ENCODE measurements at regions of chr5 and their contacts with region 1.

Region 1: DNA sequence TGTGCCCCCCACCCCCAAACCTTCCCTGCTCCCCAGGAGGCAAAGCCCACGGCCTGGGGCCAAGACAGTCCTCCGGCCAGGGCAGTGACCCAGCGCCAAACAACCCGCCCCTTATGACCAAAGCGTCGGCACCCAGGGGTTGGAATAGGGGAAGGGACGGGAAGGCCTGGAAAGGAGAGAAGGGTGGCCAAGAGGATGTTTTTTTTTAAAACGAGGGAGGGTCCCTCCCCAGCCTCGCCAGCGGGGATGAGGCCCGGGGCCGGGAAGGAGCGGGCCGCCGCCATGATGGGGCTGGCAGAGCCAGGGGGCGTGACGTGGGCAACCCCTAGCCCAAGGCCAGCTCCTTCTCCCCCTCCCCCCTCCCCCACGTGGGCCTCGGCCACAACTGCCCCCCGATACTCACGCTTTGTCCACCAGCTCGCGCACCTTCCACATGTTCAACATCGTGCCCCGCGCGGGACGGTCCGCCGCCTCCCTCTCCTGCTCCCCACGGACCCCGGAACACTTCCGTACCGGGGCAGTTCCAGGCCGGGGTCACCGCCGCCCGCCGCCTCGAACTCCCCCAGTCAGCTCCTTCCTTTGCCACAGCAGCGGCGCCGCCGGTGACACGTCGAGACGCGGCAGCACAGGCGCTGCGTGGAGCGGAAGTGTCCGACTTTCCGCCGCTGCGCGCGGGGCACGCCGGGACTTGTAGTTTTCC is at the start of gene CLINT1:
- DNase-seq: peak; percentile 77 to 95
- H3K4me3 ChIP-seq: peak within 1 kb of the TSS; percentile 94 to 96
- H3K27ac ChIP-seq: peak within 1 kb of the TSS; percentile 86 to 92
- H3K4me1 ChIP-seq: peaks cover 0 to 25% of the 10 kb centered on the region in 2 donors
- H3K27me3 ChIP-seq: no peaks in the 10 kb centered on the region
- CTCF ChIP-seq: peak in 1 of 3 experiments; percentile 11
- total RNA-seq, gene CLINT1: 16.4 TPM

Region 2: DNA sequence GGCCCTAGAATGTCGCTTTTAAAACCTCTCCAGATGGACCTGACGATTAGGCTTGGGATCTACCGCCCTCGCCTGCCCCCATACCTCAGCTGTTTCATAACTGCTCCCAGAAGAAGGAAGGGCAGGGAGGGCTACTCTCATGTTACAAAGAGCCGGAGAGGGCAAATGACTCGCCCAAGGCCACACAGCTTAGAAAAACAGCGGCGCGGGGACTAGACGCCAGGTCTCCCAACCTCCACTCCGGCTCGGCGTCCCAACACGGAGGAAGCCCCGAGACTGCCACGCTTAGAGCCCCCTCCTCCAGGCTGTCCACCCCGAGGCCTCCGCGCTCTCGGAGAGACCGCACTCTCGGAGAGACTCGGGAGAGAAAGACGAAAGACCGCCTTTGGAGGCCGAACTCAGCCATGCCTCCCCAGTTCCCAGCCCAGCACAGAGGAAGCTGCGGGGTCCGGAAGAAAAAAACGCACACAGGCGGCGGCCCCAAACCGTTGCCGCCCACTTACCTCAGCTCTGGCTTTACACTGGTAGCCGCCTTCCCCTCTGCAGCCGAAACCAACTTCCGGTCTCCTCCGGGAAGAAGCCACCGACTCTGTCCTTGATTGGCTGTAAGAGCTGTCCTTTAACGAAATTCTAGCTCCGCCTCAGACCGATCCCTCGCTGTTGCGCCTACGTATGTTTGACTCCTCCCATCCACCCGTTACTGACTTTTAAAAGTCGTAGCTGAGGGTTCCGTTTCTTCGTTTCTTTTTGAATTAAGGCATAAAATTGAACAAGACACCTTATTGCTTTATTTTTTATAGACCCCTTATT is 716.2 kb before region 1 on chr5 and contains the start of gene MED7:
- intact Hi-C with region 1: loop called (anchors 5 kb)
- DNase-seq: peak; percentile 88 to 98
- H3K4me3 ChIP-seq: peak within 1 kb of the TSS; percentile 74 to 77
- H3K27ac ChIP-seq: peak within 1 kb of the TSS; percentile 89 to 90
- H3K4me1 ChIP-seq: peaks cover 5 to 9% of the 10 kb centered on the region in 2 donors
- H3K27me3 ChIP-seq: no peaks in the 10 kb centered on the region
- CTCF ChIP-seq: no peak
- total RNA-seq, gene MED7: 2.3 TPM

Region 3: GRCh38 chr5:157820593-157821252 is 38.0 kb before region 1 on chr5:
- intact Hi-C with region 1: loop called (anchors 5 kb)
- DNase-seq: no peak
- H3K4me3 ChIP-seq: no peak overlapping the region
- H3K27ac ChIP-seq: peak overlapping the region; percentile 31 to 41
- H3K4me1 ChIP-seq: peaks cover 0 to 13% of the 10 kb centered on the region in 2 donors
- H3K27me3 ChIP-seq: no peaks in the 10 kb centered on the region
- CTCF ChIP-seq: peak in 2 of 3 experiments; percentile 45 to 60

Region 4: GRCh38 chr5:157956271-157956885 is 97.7 kb after region 1 on chr5:
- intact Hi-C with region 1: no loop called
- DNase-seq: no peak
- H3K4me3 ChIP-seq: no peak overlapping the region
- H3K27ac ChIP-seq: no peak overlapping the region
- H3K4me1 ChIP-seq: no peaks in the 10 kb centered on the region
- H3K27me3 ChIP-seq: no peaks in the 10 kb centered on the region
- CTCF ChIP-seq: no peak

Region 5: DNA sequence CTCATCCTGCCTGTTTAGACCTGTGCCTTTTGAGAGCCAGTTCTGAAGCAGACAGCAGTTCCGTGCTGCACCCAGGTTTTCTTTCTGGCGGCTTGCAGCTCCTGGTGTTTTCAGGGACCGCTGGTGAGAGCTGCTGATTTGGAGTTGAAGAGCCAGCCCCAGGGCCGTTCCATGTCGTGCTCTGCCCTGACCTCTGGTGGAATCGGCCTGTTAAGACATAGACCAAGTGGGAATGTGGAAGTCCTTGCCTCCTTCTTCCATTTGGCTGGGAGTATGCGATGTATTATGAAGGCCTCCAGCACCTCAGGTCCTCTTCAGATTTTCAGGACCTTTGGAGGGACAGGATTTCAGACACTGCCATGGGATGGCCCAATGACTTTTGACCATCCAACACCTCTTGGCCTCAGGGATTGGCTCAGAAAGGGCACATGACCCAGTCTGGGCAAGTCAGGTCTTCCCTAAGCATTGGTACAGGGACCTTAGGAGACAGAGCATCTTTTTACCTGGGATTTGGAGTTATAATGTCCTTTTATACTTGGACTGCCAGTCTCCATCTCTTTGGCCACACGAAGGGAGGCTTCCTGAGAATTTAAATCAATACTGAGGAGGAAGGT is 136.3 kb after region 1 on chr5:
- intact Hi-C with region 1: loop called (anchors 10 kb)
- DNase-seq: peak in 1 of 2 donors; percentile 71
- H3K4me3 ChIP-seq: no peak overlapping the region
- H3K27ac ChIP-seq: no peak overlapping the region
- H3K4me1 ChIP-seq: peaks cover 0 to 4% of the 10 kb centered on the region in 2 donors
- H3K27me3 ChIP-seq: no peaks in the 10 kb centered on the region
- CTCF ChIP-seq: peak; percentile 67 to 74 (median 74)

Region 6: DNA sequence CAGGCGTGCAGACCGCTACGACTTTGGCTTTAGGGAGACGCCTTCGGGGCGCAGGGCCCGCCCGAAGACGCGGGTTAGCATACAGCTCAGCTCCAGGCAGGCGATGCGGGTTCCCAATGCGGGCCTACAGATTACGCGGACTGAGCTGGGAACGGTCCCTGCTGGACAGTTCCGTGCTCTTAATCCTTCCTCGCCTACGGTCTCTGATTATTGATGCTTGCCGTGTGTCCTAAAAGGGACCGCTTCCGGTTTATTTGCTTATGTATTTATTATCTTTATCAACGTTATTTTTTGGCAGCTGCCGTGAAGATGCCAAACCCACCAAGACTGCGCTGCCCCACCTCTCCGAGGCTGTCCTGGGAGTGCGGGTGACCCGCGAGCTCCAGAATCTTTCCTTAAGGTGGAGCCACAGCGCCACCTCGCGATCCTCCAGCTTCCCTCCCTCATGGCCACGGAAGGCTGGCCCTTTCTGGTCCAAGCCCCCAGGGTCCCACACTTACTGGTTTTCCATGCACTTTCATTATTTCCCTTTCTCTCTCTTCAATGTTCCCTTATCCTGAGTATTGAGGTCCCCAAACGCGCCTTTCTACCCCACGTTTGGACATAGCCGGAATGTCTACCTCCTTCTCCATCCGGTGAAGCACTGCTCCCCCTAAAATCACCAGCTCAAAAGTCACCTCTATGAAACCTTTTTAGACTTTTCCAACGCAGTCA is 1248.0 kb after region 1 on chr5:
- intact Hi-C with region 1: loop called (anchors 10 kb)
- DNase-seq: peak in 1 of 2 donors; percentile 88
- H3K4me3 ChIP-seq: peak overlapping the region; percentile 46 to 61
- H3K27ac ChIP-seq: peak overlapping the region in 1 of 2 donors; percentile 50
- H3K4me1 ChIP-seq: peaks cover 5 to 8% of the 10 kb centered on the region in 2 donors
- H3K27me3 ChIP-seq: no peaks in the 10 kb centered on the region
- CTCF ChIP-seq: peak; percentile 83 to 91 (median 89)

Region 7: DNA sequence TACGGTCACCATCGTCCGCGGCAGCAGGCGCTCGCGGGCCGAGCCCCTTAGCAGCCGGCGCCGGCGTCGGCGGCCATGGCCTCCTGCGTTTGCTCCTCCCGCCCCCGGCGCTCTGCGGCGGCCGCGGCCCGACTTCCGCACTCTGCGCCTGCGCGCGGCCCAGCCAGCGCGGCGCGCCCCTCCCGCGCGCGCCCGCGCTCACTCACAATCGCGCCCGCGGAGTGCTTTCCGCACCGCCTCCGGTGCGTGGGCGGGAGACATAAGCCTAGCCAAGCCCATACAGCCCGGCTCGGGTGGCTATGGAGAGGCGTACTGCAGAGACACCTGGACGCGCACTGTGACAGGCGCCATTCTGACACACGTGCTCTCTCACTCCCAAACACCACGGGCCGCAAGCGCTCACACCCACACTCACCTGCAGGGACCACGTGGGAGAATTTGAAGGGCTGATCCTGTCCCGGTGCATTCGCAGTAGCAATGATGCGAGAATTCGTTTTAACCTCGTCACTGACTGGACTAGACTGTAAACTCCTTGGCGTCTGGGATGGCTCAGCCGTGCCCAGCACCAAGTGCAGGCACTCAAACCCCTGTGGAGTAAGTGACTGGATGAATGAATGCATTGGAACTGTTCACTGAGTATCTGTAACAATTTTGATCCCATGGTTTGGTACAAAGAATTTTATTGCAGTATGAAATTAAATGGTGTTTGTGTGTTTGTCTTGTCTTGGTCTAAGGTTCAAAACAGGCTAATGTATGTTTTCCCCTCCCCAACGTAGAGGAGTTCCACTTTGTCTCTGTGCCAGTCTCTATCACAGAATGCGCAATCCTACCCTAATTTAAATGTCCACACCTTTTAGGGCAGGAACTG is 1351.0 kb after region 1 on chr5 and contains the start of gene RNF145:
- intact Hi-C with region 1: loop called (anchors 5 kb)
- DNase-seq: peak; percentile 67 to 94
- H3K4me3 ChIP-seq: peak within 1 kb of the TSS; percentile 94 to 100
- H3K27ac ChIP-seq: peak within 1 kb of the TSS; percentile 79 to 97
- H3K4me1 ChIP-seq: peaks cover 3 to 12% of the 10 kb centered on the region in 2 donors
- H3K27me3 ChIP-seq: no peaks in the 10 kb centered on the region
- CTCF ChIP-seq: no peak
- total RNA-seq, gene RNF145: 47.8 TPM